Prostate gland (tissue), 2 donors: ENCODE measurements at regions of chr5 and their contacts with region 1.

Region 1: DNA sequence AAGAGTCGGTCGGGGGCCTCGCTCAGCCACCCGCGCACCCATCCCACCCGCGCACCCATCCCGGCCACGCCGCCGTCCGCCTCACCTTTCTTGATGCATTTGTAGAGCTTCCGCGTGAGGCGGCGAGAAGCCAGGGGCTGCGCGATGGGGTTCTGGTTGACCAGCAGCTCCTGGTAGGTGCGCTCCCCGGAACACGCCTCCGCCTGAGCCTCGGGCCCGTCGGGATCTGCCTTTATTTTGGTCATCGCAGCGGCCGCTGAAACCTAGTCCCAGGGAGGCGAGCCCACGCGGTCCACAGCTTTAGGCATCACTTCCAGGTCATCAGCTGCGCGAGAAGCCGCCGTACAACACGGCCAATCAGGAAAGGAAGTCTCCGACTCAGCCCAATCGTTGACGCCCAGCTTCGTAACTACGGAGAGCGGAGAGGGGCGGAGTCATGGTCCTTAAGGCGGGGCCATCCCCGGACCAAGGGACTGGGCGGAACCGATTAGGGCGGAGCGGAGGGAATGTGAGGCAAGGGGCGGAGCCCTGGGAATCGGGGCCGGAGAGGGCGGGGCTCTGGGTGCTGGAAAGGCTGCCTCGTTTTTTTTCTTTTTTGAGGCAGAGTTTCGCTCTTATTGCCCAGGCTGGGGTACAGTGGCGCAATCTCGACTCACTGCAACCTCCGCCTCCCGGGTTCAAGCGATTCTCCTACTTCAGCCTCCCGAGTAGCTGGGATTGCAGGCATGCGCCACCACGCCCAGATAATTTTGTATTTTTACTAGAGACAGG is at the start of gene NHP2:
- DNase-seq: peak; percentile 97
- H3K4me3 ChIP-seq: peak within 1 kb of the TSS; percentile 55 to 61
- H3K27ac ChIP-seq: peak within 1 kb of the TSS; percentile 41 to 47
- H3K4me1 ChIP-seq: peaks cover 7% of the 10 kb centered on the region
- H3K27me3 ChIP-seq: no peaks in the 10 kb centered on the region
- CTCF ChIP-seq: peak in 1 of 4 experiments; percentile 10
- POLR2A ChIP-seq: peak; percentile 35
- total RNA-seq, gene NHP2: 270 to 284 TPM

Region 2: DNA sequence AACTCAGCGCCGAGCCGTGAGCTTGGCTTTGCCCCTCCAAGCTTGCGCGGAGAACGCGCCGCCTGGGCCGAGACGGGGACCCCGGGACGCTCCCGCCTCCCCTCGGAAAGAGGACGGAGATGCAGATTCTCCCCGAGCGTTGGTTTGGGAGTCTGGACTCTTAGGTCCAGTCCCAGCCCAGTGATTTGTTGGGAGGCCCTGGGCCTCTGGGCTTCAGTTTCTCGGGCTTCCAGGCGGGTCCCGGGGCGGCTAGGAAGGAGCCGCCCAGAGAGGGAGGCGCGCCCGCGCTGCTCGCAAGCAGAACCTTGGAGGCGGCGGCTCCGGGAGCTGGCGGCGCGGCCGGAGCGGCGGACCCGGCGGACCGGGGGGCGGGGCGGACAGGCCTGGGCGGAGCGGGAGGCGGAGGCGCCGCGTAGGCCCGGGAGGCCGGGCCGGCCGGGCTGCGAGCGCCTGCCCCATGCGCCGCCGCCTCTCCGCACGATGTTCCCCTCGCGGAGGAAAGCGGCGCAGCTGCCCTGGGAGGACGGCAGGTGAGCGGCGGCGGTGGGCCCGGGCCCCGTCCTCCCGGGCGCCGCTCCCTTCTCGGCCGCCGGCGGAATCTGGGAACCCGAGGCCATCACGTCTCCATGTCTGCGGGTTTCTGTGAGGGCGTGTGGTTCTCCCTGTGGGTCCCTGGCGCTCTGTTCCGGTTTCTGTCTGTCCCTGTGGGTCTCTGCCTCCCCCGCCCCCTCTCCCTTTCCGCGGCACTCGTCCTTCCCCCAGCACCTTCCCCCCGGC is 553.8 kb before region 1 on chr5 and contains the start of gene B4GALT7:
- intact Hi-C with region 1: loop called (anchors 10 kb)
- DNase-seq: peak; percentile 68
- H3K4me3 ChIP-seq: peak within 1 kb of the TSS; percentile 57 to 93
- H3K27ac ChIP-seq: peak within 1 kb of the TSS; percentile 84 to 89
- H3K4me1 ChIP-seq: peaks cover 2% of the 10 kb centered on the region
- H3K27me3 ChIP-seq: no peaks in the 10 kb centered on the region
- CTCF ChIP-seq: no peak
- POLR2A ChIP-seq: peak; percentile 84
- total RNA-seq, gene B4GALT7: 41.6 to 66.2 TPM